Endothelial cell of umbilical vein (primary cell): ENCODE measurements at regions of chr5 and their contacts with region 1.

Region 1: DNA sequence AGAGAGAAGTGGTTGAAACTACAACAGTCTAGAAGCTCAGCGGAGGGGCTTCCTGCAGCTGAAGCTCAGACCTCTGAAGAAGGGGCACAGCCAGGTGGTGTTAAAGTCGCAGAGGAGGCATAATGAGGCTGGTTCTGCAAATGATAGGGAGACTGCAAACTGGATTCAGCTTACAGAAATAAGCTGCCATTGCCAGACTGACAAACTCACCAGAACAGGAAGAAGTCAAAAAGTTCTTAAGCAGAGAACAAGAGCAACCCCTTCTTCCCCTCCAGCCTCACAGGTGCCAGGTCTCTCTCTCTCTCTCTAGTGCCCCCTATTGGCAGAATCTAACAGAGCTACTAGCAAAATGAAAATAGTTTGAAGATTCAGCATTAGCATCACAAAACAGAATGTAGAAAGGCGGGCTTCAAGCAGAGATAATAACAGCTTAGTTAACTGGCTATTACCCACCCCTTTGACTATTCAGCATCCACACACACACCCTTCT is 76.7 kb downstream of the GRAMD2B start:
- DNase-seq: peak; percentile 32
- H3K4me3 ChIP-seq: no peak overlapping the region
- H3K27ac ChIP-seq: no peak overlapping the region
- H3K4me1 ChIP-seq: peaks cover 4% of the 10 kb centered on the region
- H3K27me3 ChIP-seq: peaks cover 15 to 22% of the 10 kb centered on the region in 2 experiments
- CTCF ChIP-seq: peak; percentile 41 to 57
- POLR2A ChIP-seq: no peak

Region 2: DNA sequence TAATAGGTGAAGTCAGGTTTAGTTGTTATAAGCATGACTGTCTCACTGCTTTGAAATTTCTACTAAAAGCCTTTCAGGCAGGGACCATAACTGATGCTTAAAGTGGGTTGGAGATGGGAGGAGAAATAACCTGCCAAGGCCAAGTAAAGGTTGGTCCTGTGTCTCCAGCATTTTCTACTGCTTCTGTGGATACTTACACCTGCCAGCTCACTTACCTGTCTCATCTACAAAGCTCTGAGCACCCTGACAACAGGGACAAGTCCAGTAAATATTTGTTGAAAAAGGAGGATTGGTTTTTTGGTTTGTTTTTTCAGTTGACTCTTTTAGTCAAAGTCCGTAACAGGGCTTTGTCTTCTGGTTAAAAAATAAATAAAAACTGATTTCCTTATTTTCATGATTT is 38.1 kb before region 1 on chr5:
- CTCF ChIA-PET with region 1: no interaction called
- POLR2A ChIA-PET with region 1: no interaction called
- dilution Hi-C with region 1: no loop called
- intact Hi-C with region 1: no loop called
- DNase-seq: no peak
- H3K4me3 ChIP-seq: no peak overlapping the region
- H3K27ac ChIP-seq: no peak overlapping the region
- H3K4me1 ChIP-seq: no peaks in the 10 kb centered on the region
- H3K27me3 ChIP-seq: no peaks in the 10 kb centered on the region
- CTCF ChIP-seq: no peak
- POLR2A ChIP-seq: no peak

Region 3: DNA sequence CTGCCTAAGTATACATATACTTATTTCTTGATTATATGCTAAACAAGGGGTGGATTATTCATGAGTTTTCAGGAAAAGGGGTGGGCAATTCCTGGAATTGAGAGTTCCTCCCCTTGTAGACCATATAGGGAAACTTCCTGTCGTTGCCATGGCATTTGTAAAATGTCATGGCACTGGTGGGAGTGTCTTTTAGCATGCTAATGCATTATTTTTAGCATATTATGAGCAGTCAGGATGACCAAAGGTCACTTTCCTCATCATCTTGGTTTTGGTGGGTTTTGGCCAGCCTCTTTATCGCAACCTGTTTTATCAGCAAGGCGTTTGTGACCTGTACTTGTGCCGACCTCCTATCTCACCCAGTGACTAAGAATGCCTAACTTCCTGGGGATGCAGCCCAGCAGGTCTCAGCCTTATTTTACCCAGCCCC is 14.2 kb after region 1 on chr5:
- CTCF ChIA-PET with region 1: interaction called, 12 read pairs
- POLR2A ChIA-PET with region 1: no interaction called
- dilution Hi-C with region 1: no loop called
- intact Hi-C with region 1: no loop called
- DNase-seq: no peak
- H3K4me3 ChIP-seq: no peak overlapping the region
- H3K27ac ChIP-seq: no peak overlapping the region
- H3K4me1 ChIP-seq: peaks cover 4% of the 10 kb centered on the region
- H3K27me3 ChIP-seq: no peaks in the 10 kb centered on the region
- CTCF ChIP-seq: no peak
- POLR2A ChIP-seq: no peak

Region 4: GRCh38 chr5:126544087-126544740 is 44.3 kb after region 1 on chr5:
- CTCF ChIA-PET with region 1: interaction called, 3 read pairs
- POLR2A ChIA-PET with region 1: no interaction called
- dilution Hi-C with region 1: no loop called
- intact Hi-C with region 1: loop called (anchors 1 kb)
- DNase-seq: peak; percentile 53
- H3K4me3 ChIP-seq: no peak overlapping the region
- H3K27ac ChIP-seq: no peak overlapping the region
- H3K4me1 ChIP-seq: no peaks in the 10 kb centered on the region
- H3K27me3 ChIP-seq: no peaks in the 10 kb centered on the region
- CTCF ChIP-seq: peak; percentile 46 to 66
- POLR2A ChIP-seq: no peak

Region 5: GRCh38 chr5:126927429-126927828 is 427.5 kb after region 1 on chr5:
- CTCF ChIA-PET with region 1: no interaction called
- POLR2A ChIA-PET with region 1: no interaction called
- dilution Hi-C with region 1: no loop called
- intact Hi-C with region 1: no loop called
- DNase-seq: no peak
- H3K4me3 ChIP-seq: no peak overlapping the region
- H3K27ac ChIP-seq: no peak overlapping the region
- H3K4me1 ChIP-seq: no peaks in the 10 kb centered on the region
- H3K27me3 ChIP-seq: no peaks in the 10 kb centered on the region
- CTCF ChIP-seq: no peak
- POLR2A ChIP-seq: no peak